CD4-positive, alpha-beta T cell (primary cell): ENCODE measurements at regions of chr17 and their contacts with region 1.

Region 1: GRCh38 chr17:76014184-76014924 is 12.8 kb downstream of the EVPL start:
- DNase-seq: peak; percentile 59 to 88 (median 74)
- ATAC-seq: peak; percentile 98
- H3K4me3 ChIP-seq: no peak overlapping the region
- H3K4me3 Mint-ChIP-seq: no peak overlapping the region
- H3K27ac ChIP-seq: no peak overlapping the region
- H3K27ac Mint-ChIP-seq: no peak overlapping the region
- H3K4me1 ChIP-seq: peaks cover 11% of the 10 kb centered on the region
- H3K4me1 Mint-ChIP-seq: peaks cover 7% of the 10 kb centered on the region
- H3K27me3 ChIP-seq: no peaks in the 10 kb centered on the region
- H3K27me3 Mint-ChIP-seq: no peaks in the 10 kb centered on the region
- CTCF ChIP-seq: peak; percentile 94

Region 2: DNA sequence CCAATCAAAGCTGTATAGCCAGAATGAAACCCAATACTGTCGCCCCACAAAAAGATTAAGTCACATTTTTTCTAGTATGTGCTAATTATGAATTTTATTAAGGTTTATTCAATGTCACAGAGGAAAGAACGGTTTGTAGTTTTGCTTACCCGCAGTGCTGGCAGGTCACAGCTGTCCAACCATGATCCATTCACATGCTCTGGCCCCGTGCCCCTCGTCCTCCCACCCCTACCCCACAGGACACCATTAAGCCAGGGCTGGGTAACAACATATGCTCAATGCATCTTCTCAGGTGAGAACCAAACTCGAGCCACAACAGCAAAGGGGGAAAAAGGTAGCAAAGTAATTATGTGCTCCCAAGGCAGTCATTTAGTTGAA is 72.9 kb before region 1 on chr17:
- CTCF ChIA-PET with region 1: no interaction called
- POLR2A ChIA-PET with region 1: no interaction called
- intact Hi-C with region 1: no loop called
- DNase-seq: no peak
- ATAC-seq: no peak
- H3K4me3 ChIP-seq: peak overlapping the region; percentile 84
- H3K4me3 Mint-ChIP-seq: peak overlapping the region; percentile 92
- H3K27ac ChIP-seq: no peak overlapping the region
- H3K27ac Mint-ChIP-seq: no peak overlapping the region
- H3K4me1 ChIP-seq: peaks cover 15% of the 10 kb centered on the region
- H3K4me1 Mint-ChIP-seq: peaks cover 18% of the 10 kb centered on the region
- H3K27me3 ChIP-seq: no peaks in the 10 kb centered on the region
- H3K27me3 Mint-ChIP-seq: no peaks in the 10 kb centered on the region
- CTCF ChIP-seq: no peak

Region 3: DNA sequence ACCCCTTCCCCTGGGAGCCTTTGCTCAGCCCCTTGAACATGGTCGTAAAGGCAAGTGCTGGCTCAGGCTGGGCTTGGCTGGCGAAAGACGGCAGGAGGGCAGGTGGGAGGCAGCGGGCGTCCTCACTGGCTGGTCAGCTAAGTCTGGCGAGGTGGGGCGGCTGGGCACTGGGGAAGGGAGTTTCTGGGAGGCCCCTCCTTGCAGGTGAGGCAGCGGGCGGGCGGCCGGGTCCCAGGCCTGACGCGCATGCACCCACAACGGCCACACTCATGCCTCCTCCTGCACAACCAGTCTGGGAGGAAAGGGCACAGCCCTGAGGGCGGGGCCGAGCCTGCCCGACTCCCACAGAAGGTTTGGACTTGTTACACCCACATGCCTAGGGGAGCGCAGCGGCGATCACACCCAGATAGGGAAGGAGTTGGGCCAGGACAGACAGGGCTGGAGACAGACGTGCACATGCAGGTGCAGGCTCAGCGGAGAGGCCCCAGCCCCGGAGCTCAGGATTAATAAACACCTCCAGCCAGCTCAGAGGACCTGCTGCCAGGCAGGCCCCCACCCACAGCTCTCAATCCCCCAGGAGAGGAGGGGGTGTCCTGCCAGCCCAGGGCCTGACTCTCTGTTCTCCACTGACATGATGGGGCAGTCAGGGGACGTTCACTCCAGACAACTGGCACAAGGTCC is 12.9 kb after region 1 on chr17 and contains the start of gene EVPL:
- CTCF ChIA-PET with region 1: interaction called, 3 read pairs
- POLR2A ChIA-PET with region 1: interaction called, 13 read pairs
- intact Hi-C with region 1: no loop called
- DNase-seq: no peak
- ATAC-seq: no peak
- H3K4me3 ChIP-seq: no peak within 1 kb of the TSS
- H3K4me3 Mint-ChIP-seq: no peak within 1 kb of the TSS
- H3K27ac ChIP-seq: no peak within 1 kb of the TSS
- H3K27ac Mint-ChIP-seq: peak within 1 kb of the TSS; percentile 17
- H3K4me1 ChIP-seq: peaks cover 25% of the 10 kb centered on the region
- H3K4me1 Mint-ChIP-seq: peaks cover 16% of the 10 kb centered on the region
- H3K27me3 ChIP-seq: no peaks in the 10 kb centered on the region
- H3K27me3 Mint-ChIP-seq: no peaks in the 10 kb centered on the region
- CTCF ChIP-seq: no peak
- total RNA-seq, gene EVPL: 0.14 to 0.38 TPM

Region 4: DNA sequence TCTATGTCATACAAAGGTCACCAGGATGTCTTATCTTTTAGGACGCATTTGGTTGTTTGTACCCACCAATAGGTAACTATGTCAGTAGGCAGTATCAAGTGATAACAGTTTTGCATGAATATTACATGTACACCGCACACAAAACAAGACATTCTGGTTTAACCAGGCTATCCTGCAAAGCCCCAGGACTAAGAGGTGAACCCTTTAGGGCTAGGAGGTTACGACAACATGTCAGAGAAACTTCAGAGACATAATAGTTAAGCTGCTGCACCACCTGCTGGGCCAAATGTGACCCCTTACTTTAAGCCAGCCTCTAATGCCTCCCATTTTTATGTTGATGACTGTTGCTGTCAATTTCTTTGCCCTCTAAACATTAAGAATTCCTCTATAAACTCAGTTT is 42.5 kb after region 1 on chr17:
- CTCF ChIA-PET with region 1: no interaction called
- POLR2A ChIA-PET with region 1: no interaction called
- intact Hi-C with region 1: loop called in 1 of 2 experiments (anchors 5 kb)
- DNase-seq: no peak
- ATAC-seq: no peak
- H3K4me3 ChIP-seq: no peak overlapping the region
- H3K4me3 Mint-ChIP-seq: no peak overlapping the region
- H3K27ac ChIP-seq: no peak overlapping the region
- H3K27ac Mint-ChIP-seq: no peak overlapping the region
- H3K4me1 ChIP-seq: no peaks in the 10 kb centered on the region
- H3K4me1 Mint-ChIP-seq: peaks cover 11% of the 10 kb centered on the region
- H3K27me3 ChIP-seq: no peaks in the 10 kb centered on the region
- H3K27me3 Mint-ChIP-seq: no peaks in the 10 kb centered on the region
- CTCF ChIP-seq: no peak

Region 5: DNA sequence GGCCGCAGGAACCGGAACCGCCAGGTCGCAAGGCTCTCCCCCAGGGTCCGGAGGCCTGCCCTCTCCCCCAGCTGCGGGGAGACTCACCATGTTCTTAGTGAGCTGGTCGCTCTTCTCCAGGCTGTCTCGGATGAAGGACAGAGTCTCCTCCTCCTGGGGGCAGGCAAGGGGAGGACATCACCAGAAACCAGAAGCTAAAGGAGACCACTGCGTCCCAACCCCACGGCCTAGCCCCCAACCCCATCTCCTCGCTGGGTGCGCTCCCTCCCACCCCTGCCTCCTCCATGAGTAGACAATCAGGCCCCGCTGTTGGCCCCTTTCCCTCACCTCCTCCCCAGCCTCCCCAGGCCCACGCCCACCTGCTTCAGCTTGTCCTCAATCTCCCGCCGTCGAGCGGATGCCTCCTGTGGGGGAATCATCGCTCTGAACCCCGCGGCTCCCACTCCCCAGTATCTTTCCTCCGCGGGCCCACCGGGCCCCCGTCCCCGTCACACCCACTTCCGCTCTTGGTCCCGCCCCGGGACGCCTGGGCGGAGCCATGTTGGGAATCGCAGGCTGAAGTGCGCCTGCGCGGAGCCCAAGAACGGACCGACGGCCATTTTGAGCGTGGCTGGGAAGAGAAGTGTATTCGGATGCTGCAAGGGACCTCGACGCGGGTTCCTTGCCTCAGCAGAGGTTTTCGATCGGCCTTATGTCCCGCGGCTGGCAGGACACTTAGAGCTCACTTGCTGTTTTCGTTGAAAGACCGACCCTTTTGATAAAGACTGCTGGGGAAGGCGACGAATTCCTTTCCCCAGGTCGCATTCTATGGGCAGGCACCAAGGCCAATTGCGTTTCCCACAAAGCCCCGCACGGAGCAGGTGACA is 89.2 kb after region 1 on chr17 and contains the start of gene EXOC7:
- CTCF ChIA-PET with region 1: interaction called, 5 read pairs
- POLR2A ChIA-PET with region 1: interaction called, 5 read pairs
- intact Hi-C with region 1: loop called (anchors 5 kb)
- DNase-seq: peak; percentile 86 to 97 (median 92)
- ATAC-seq: peak; percentile 94
- H3K4me3 ChIP-seq: peak within 1 kb of the TSS; percentile 85
- H3K4me3 Mint-ChIP-seq: peak within 1 kb of the TSS; percentile 98
- H3K27ac ChIP-seq: peak within 1 kb of the TSS; percentile 68 to 82
- H3K27ac Mint-ChIP-seq: peak within 1 kb of the TSS; percentile 90
- H3K4me1 ChIP-seq: peaks cover 32% of the 10 kb centered on the region
- H3K4me1 Mint-ChIP-seq: peaks cover 38% of the 10 kb centered on the region
- H3K27me3 ChIP-seq: no peaks in the 10 kb centered on the region
- H3K27me3 Mint-ChIP-seq: no peaks in the 10 kb centered on the region
- CTCF ChIP-seq: no peak
- total RNA-seq, gene EXOC7: 88.1 to 90.6 TPM

Region 6: DNA sequence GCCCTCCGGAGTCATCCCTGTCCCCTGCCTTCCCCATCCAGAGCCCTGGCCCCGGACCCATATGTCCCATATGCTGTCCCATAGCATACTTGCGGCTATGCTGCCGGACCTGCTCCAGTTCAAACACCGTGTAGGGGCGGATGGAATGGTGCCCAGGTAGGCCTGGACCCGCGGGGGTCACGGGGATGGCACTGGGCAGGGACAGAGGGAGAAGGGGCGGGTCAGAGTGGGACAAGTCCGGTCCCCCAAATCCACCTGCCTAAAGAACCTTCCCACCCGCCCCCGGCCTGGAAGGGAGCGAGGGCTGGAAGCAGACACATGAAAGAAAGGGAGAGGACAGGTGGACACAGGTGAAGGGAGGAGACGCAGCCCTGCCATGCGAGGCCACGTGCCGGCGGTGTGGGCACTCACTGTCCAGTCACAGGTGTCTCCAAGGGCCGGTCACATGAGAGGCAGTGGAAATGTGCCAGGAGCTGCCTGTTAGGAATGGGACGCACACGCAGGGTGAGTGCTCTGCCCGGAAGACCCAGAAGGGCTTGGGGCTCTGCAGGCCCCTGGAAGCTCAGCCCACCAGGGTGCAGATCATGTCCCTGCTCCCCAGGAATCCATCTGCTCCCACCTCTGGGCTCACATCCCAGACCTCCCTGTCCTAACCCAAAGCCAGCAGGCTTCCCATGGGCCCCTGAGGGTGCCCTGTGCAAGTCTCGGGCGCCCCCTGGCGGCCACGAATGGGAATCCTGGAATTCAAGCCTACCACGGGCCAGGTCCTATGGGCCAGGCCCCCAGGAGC is 264.8 kb after region 1 on chr17:
- CTCF ChIA-PET with region 1: interaction called, 5 read pairs
- POLR2A ChIA-PET with region 1: interaction called, 3 read pairs
- intact Hi-C with region 1: loop called in 1 of 2 experiments (anchors 1 kb)
- DNase-seq: peak; percentile 74 to 91 (median 84)
- ATAC-seq: peak; percentile 89
- H3K4me3 ChIP-seq: no peak overlapping the region
- H3K4me3 Mint-ChIP-seq: no peak overlapping the region
- H3K27ac ChIP-seq: no peak overlapping the region
- H3K27ac Mint-ChIP-seq: no peak overlapping the region
- H3K4me1 ChIP-seq: peaks cover 31% of the 10 kb centered on the region
- H3K4me1 Mint-ChIP-seq: peaks cover 13% of the 10 kb centered on the region
- H3K27me3 ChIP-seq: no peaks in the 10 kb centered on the region
- H3K27me3 Mint-ChIP-seq: no peaks in the 10 kb centered on the region
- CTCF ChIP-seq: peak; percentile 98

Region 7: GRCh38 chr17:76296186-76296585 is 281.8 kb after region 1 on chr17:
- CTCF ChIA-PET with region 1: interaction called, 8 read pairs
- POLR2A ChIA-PET with region 1: no interaction called
- intact Hi-C with region 1: loop called in 1 of 2 experiments (anchors 1 kb)
- DNase-seq: no peak
- ATAC-seq: no peak
- H3K4me3 ChIP-seq: no peak overlapping the region
- H3K4me3 Mint-ChIP-seq: no peak overlapping the region
- H3K27ac ChIP-seq: no peak overlapping the region
- H3K27ac Mint-ChIP-seq: no peak overlapping the region
- H3K4me1 ChIP-seq: peaks cover 2% of the 10 kb centered on the region
- H3K4me1 Mint-ChIP-seq: peaks cover 4% of the 10 kb centered on the region
- H3K27me3 ChIP-seq: no peaks in the 10 kb centered on the region
- H3K27me3 Mint-ChIP-seq: no peaks in the 10 kb centered on the region
- CTCF ChIP-seq: no peak

Region 8: DNA sequence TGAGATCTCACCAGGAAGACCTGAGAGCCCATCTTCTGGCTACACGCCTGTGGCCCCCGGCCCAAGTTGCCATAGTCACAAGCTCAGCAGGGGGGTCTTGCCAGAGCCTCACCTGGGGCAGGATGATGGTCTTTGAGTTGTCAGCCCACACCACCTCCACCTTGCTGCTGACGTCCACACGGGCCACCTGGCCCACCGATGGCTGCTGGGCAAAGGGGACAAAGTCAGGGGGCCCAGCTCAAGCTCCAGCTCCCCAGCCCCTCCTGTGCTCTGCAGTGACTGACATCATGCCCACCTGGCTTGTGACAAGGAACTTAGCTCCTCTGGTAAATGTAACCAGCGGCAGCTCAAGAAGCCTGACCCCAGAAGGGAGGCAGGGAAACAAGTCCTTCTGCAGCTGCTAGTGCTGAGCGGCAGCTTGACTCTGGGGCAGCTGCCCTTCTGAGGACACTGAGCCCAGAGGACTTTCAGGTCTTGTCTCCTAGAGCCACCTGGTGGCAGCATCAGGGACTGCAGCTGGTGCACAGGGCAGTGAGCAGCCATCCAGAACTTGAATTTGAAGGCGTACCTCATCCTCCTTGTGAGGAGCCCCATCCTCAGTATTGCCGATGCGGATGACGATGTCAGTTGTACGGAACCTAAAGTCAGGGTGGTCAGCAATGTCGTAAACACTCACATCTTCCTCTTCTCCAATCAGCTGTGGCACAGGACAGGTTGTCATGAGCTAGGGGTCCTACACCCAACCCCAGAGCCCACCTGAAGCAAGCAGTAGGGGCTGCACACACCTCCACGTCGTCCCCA is 383.5 kb after region 1 on chr17:
- CTCF ChIA-PET with region 1: interaction called, 5 read pairs
- POLR2A ChIA-PET with region 1: no interaction called
- intact Hi-C with region 1: loop called in 1 of 2 experiments (anchors 5 kb)
- DNase-seq: peak; percentile 76 to 90 (median 83)
- ATAC-seq: peak; percentile 92
- H3K4me3 ChIP-seq: no peak overlapping the region
- H3K4me3 Mint-ChIP-seq: no peak overlapping the region
- H3K27ac ChIP-seq: no peak overlapping the region
- H3K27ac Mint-ChIP-seq: no peak overlapping the region
- H3K4me1 ChIP-seq: no peaks in the 10 kb centered on the region
- H3K4me1 Mint-ChIP-seq: no peaks in the 10 kb centered on the region
- H3K27me3 ChIP-seq: no peaks in the 10 kb centered on the region
- H3K27me3 Mint-ChIP-seq: no peaks in the 10 kb centered on the region
- CTCF ChIP-seq: peak; percentile 94